GM10248 (cell line): ENCODE measurements at regions of chr1 and their contacts with region 1.

Region 1: GRCh38 chr1:116737020-116737854 is 17.0 kb upstream of the CD2 start:
- DNase-seq: peak; percentile 75
- CTCF ChIP-seq: peak; percentile 89

Region 2: GRCh38 chr1:116411784-116412479 is 325.3 kb before region 1 on chr1:
- CTCF ChIA-PET with region 1: no interaction called
- POLR2A ChIA-PET with region 1: no interaction called
- DNase-seq: no peak
- CTCF ChIP-seq: no peak

Region 3: DNA sequence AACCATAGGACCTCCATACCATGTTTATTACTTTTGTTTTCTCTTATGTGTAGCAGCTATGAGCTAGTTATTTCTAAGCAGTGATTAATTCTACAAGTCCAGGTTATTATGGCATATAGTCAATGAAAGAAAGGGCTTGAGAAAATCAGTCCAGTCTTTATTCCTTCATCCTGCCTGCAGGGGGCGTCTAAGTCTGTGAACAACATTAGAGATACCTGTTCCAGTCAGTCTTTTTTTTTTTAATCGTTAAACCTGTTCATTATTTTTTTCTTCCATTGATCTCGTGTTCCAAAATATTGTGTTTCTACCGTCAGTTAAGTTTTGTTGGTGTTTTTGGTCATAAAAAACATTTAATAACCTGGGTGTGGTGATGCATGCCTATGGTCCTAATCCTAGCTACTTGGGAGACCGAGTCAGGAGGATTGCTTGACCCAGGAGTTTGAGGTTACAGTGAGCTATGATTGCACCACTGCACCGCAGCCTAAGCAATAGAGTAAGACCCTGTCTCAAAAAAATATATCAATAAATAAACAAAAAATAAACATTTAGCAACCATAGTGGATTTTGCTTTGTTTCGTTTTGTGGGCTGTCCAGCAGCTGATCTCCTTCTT is 12.4 kb before region 1 on chr1:
- CTCF ChIA-PET with region 1: interaction called, 67 read pairs
- POLR2A ChIA-PET with region 1: no interaction called
- DNase-seq: peak; percentile 56
- CTCF ChIP-seq: peak; percentile 67

Region 4: DNA sequence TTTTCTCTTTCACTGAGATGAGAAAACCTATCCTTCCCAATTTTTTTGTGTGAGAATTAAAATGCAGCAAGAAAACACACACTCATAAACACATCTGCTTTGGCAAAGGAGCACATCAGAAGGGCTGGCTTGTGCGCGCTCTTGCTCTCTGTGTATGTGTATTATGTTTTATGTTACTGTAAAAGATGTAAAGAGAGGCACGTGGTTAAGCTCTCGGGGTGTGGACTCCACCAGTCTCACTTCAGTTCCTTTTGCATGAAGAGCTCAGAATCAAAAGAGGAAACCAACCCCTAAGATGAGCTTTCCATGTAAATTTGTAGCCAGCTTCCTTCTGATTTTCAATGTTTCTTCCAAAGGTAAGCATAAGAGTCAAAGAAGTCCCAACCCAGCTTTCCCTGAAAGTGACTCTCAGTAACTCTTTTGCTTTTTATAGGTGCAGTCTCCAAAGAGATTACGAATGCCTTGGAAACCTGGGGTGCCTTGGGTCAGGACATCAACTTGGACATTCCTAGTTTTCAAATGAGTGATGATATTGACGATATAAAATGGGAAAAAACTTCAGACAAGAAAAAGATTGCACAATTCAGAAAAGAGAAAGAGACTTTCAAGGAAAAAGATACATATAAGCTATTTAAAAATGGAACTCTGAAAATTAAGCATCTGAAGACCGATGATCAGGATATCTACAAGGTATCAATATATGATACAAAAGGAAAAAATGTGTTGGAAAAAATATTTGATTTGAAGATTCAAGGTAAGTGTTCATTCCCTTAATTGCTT is 17.2 kb after region 1 on chr1 and contains the start of gene CD2:
- CTCF ChIA-PET with region 1: interaction called, 26 read pairs
- POLR2A ChIA-PET with region 1: no interaction called
- DNase-seq: no peak
- CTCF ChIP-seq: no peak

Region 5: GRCh38 chr1:116769561-116769977 is 32.3 kb after region 1 on chr1:
- CTCF ChIA-PET with region 1: interaction called, 40 read pairs
- POLR2A ChIA-PET with region 1: interaction called, 7 read pairs
- DNase-seq: peak; percentile 53
- CTCF ChIP-seq: no peak

Region 6: GRCh38 chr1:116826818-116827606 is 89.8 kb after region 1 on chr1:
- CTCF ChIA-PET with region 1: interaction called, 10 read pairs
- POLR2A ChIA-PET with region 1: interaction called, 3 read pairs
- DNase-seq: peak; percentile 80
- CTCF ChIP-seq: no peak

Region 7: DNA sequence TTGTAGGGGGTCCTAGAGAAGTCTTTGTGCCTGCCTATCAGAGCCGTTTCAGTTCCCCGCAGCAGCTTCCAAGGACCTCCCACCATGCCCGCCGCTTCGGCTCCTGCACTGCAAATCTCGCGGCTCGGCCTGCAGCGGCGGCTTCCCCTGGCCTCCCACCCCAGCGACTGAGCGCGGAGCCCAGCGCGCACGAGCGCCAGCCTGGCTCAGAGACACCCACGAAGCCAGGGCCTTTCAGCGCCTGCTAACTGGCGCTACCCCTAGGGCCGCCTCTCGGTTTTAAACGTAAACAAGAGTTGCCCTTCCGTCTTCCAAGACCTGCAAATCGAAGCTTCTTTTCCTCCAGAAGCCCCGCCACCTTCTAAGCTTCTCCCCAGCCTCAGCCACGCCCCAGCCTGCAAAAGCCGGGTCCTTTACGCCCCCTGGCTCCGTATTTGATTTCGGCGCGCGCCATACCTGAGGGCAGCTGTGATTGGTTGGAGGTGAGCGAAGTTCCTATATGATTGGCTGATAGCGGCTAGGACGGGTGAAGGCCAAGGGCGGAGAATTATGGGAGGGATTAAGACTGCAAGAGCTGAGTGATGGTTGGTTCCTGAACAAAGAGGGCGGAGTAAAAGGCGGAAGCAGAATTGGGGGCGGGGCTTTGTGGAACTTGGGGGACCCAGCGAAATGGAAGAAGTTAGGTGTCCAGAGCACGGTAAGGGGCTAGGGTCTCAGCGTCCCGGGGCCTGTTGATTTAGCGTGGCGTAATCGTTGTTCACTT is 322.6 kb after region 1 on chr1 and contains the start of gene TTF2:
- CTCF ChIA-PET with region 1: interaction called, 17 read pairs
- POLR2A ChIA-PET with region 1: no interaction called
- DNase-seq: peak; percentile 96
- CTCF ChIP-seq: no peak